Activated CD8-positive, alpha-beta T cell treated with anti-CD3 and anti-CD28 coated beads for 36 hours (primary cell): ENCODE measurements at regions of chr12 and their contacts with region 1.

Region 1: DNA sequence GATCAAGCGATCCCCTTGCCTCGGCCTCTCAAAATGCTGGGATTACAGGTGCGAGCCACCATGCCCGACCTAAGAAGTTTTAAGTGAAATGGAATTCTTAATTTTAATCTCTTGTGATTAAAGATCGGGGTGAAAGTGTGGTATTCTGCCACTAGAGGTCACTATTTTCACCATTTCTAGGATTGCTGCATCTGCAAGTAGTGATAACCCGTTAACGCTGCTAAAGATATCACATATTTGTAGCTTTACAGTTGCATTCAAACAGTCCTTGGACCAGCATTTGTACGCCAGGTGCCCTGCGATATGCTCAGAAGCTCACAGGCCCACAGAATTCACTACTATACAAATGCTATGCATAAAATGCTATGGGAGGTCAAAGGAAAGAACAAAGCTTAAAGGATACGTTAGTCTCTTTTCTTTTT is 19.3 kb downstream of the CCDC62 start:
- DNase-seq: peak; percentile 9
- ATAC-seq: peak; percentile 75
- H3K4me3 Mint-ChIP-seq: no peak overlapping the region
- H3K27ac Mint-ChIP-seq: no peak overlapping the region
- H3K4me1 Mint-ChIP-seq: peaks cover 2% of the 10 kb centered on the region
- H3K27me3 Mint-ChIP-seq: no peaks in the 10 kb centered on the region
- CTCF ChIP-seq: peak; percentile 74

Region 2: GRCh38 chr12:122803937-122804336 is 10.2 kb after region 1 on chr12:
- CTCF ChIA-PET with region 1: interaction called, 27 read pairs
- POLR2A ChIA-PET with region 1: no interaction called
- intact Hi-C with region 1: no loop called
- DNase-seq: no peak
- ATAC-seq: no peak
- H3K4me3 Mint-ChIP-seq: no peak overlapping the region
- H3K27ac Mint-ChIP-seq: no peak overlapping the region
- H3K4me1 Mint-ChIP-seq: no peaks in the 10 kb centered on the region
- H3K27me3 Mint-ChIP-seq: no peaks in the 10 kb centered on the region
- CTCF ChIP-seq: no peak

Region 3: GRCh38 chr12:122819209-122819785 is 25.6 kb after region 1 on chr12:
- CTCF ChIA-PET with region 1: interaction called, 25 read pairs
- POLR2A ChIA-PET with region 1: interaction called, 3 read pairs
- intact Hi-C with region 1: no loop called
- DNase-seq: no peak
- ATAC-seq: no peak
- H3K4me3 Mint-ChIP-seq: no peak overlapping the region
- H3K27ac Mint-ChIP-seq: no peak overlapping the region
- H3K4me1 Mint-ChIP-seq: no peaks in the 10 kb centered on the region
- H3K27me3 Mint-ChIP-seq: no peaks in the 10 kb centered on the region
- CTCF ChIP-seq: no peak

Region 4: GRCh38 chr12:122841544-122842321 is 48.0 kb after region 1 on chr12:
- CTCF ChIA-PET with region 1: interaction called, 17 read pairs
- POLR2A ChIA-PET with region 1: no interaction called
- intact Hi-C with region 1: no loop called
- DNase-seq: no peak
- ATAC-seq: no peak
- H3K4me3 Mint-ChIP-seq: no peak overlapping the region
- H3K27ac Mint-ChIP-seq: peak overlapping the region; percentile 10
- H3K4me1 Mint-ChIP-seq: peaks cover 31% of the 10 kb centered on the region
- H3K27me3 Mint-ChIP-seq: no peaks in the 10 kb centered on the region
- CTCF ChIP-seq: no peak

Region 5: GRCh38 chr12:122951979-122952892 is 158.5 kb after region 1 on chr12:
- CTCF ChIA-PET with region 1: interaction called, 19 read pairs
- POLR2A ChIA-PET with region 1: no interaction called
- intact Hi-C with region 1: loop called (anchors 5 kb)
- DNase-seq: peak; percentile 85
- ATAC-seq: peak; percentile 99
- H3K4me3 Mint-ChIP-seq: no peak overlapping the region
- H3K27ac Mint-ChIP-seq: no peak overlapping the region
- H3K4me1 Mint-ChIP-seq: peaks cover 13% of the 10 kb centered on the region
- H3K27me3 Mint-ChIP-seq: peaks cover 2% of the 10 kb centered on the region
- CTCF ChIP-seq: peak; percentile 96

Region 6: GRCh38 chr12:123085730-123086487 is 292.2 kb after region 1 on chr12:
- CTCF ChIA-PET with region 1: no interaction called
- POLR2A ChIA-PET with region 1: no interaction called
- intact Hi-C with region 1: no loop called
- DNase-seq: peak; percentile 54
- ATAC-seq: peak; percentile 62
- H3K4me3 Mint-ChIP-seq: no peak overlapping the region
- H3K27ac Mint-ChIP-seq: no peak overlapping the region
- H3K4me1 Mint-ChIP-seq: peaks cover 24% of the 10 kb centered on the region
- H3K27me3 Mint-ChIP-seq: no peaks in the 10 kb centered on the region
- CTCF ChIP-seq: no peak